Activated B cell treated with CpG ODN at 0.5 μM for 24 hours (primary cell): ENCODE measurements at regions of chr7 and their contacts with region 1.

Region 1: GRCh38 chr7:7182156-7183060 is at the start of gene C1GALT1:
- DNase-seq: peak; percentile 94
- ATAC-seq: peak; percentile 84
- H3K4me3 Mint-ChIP-seq: peak within 1 kb of the TSS; percentile 99
- H3K27ac Mint-ChIP-seq: peak within 1 kb of the TSS; percentile 100
- H3K4me1 Mint-ChIP-seq: peaks cover 43% of the 10 kb centered on the region
- H3K27me3 Mint-ChIP-seq: no peaks in the 10 kb centered on the region
- CTCF ChIP-seq: no peak
- total RNA-seq, gene C1GALT1: 42.1 and 44.2 TPM in 2 replicates

Region 2: DNA sequence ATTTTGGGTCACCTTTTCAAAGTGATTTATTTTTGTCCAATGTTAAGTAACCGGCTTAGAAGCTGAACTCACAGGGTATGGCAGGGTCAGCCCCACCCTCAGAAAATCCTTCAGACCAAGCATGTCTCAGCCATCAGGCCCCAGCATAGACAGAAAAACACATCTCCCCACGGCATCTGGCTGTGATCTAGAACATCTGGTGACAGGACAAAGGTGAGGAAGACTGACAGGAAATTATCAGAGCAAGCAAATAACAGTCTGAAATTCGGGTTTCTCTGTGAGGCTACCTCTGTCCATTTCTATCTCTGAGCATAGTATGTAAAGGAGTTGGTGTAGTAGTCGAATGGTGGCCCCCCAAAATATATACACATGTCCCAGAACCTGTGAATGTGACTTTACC is 177.1 kb before region 1 on chr7:
- CTCF ChIA-PET with region 1: no interaction called
- POLR2A ChIA-PET with region 1: no interaction called
- intact Hi-C with region 1: no loop called
- DNase-seq: no peak
- ATAC-seq: no peak
- H3K4me3 Mint-ChIP-seq: no peak overlapping the region
- H3K27ac Mint-ChIP-seq: no peak overlapping the region
- H3K4me1 Mint-ChIP-seq: no peaks in the 10 kb centered on the region
- H3K27me3 Mint-ChIP-seq: peaks cover 14% of the 10 kb centered on the region
- CTCF ChIP-seq: no peak

Region 3: GRCh38 chr7:7032210-7032609 is 150.2 kb before region 1 on chr7:
- CTCF ChIA-PET with region 1: no interaction called
- POLR2A ChIA-PET with region 1: no interaction called
- intact Hi-C with region 1: no loop called
- DNase-seq: no peak
- ATAC-seq: no peak
- H3K4me3 Mint-ChIP-seq: no peak overlapping the region
- H3K27ac Mint-ChIP-seq: no peak overlapping the region
- H3K4me1 Mint-ChIP-seq: no peaks in the 10 kb centered on the region
- H3K27me3 Mint-ChIP-seq: peaks cover 42% of the 10 kb centered on the region
- CTCF ChIP-seq: no peak

Region 4: GRCh38 chr7:7157177-7157886 is 25.1 kb before region 1 on chr7:
- CTCF ChIA-PET with region 1: interaction called, 11 read pairs
- POLR2A ChIA-PET with region 1: interaction called, 40 read pairs
- intact Hi-C with region 1: loop called (anchors 1 kb)
- DNase-seq: no peak
- ATAC-seq: peak; percentile 86
- H3K4me3 Mint-ChIP-seq: peak overlapping the region; percentile 88
- H3K27ac Mint-ChIP-seq: peak overlapping the region; percentile 95
- H3K4me1 Mint-ChIP-seq: peaks cover 56% of the 10 kb centered on the region
- H3K27me3 Mint-ChIP-seq: no peaks in the 10 kb centered on the region
- CTCF ChIP-seq: no peak

Region 5: DNA sequence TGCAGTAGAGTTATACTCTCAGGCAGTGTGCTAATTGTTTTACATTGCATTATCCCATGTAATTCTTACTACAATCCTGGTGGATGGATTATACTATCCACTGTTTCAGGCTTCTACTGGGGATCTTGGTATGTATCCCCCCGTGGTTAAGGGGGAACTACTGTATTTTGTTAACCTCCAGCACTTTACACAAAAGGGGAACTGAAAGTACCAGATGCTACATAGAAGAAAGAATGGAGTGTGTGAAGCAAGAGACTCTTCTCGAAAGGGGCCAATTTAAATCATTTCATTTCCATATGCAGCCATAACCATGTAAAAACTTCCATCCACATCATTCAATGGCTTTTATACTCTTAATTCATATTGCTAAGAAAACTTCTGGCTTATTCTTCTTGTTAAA is 69.3 kb after region 1 on chr7:
- CTCF ChIA-PET with region 1: interaction called, 13 read pairs
- POLR2A ChIA-PET with region 1: interaction called, 32 read pairs
- intact Hi-C with region 1: loop called (anchors 1 kb)
- DNase-seq: no peak
- ATAC-seq: peak; percentile 96
- H3K4me3 Mint-ChIP-seq: peak overlapping the region; percentile 49
- H3K27ac Mint-ChIP-seq: peak overlapping the region; percentile 96
- H3K4me1 Mint-ChIP-seq: peaks cover 85% of the 10 kb centered on the region
- H3K27me3 Mint-ChIP-seq: no peaks in the 10 kb centered on the region
- CTCF ChIP-seq: no peak

Region 6: GRCh38 chr7:7321720-7322128 is 139.3 kb after region 1 on chr7:
- CTCF ChIA-PET with region 1: interaction called, 4 read pairs
- POLR2A ChIA-PET with region 1: no interaction called
- intact Hi-C with region 1: loop called (anchors 5 kb)
- DNase-seq: peak; percentile 18
- ATAC-seq: peak; percentile 95
- H3K4me3 Mint-ChIP-seq: no peak overlapping the region
- H3K27ac Mint-ChIP-seq: peak overlapping the region; percentile 33
- H3K4me1 Mint-ChIP-seq: peaks cover 27% of the 10 kb centered on the region
- H3K27me3 Mint-ChIP-seq: no peaks in the 10 kb centered on the region
- CTCF ChIP-seq: no peak

Region 7: DNA sequence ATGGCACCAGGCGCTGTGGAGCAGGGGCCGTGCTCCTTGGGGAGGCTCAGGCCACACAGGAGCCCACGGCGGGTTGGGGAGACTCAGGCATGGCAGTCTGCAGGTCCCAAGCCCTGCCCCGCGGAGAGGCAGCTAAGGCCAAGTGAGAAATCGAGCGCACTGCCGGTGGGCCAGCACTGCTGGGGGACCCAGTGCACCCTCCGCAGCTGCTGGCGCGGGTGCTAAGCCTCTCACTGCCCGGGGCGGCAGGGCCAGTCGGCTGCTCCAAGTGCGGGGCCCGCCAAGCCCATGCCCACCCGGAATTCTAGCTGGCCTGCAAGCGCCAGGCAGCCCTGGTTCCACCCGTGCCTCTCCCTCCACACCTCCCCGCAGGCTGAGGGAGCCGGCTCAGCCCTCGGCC is 296.2 kb after region 1 on chr7:
- CTCF ChIA-PET with region 1: no interaction called
- POLR2A ChIA-PET with region 1: no interaction called
- intact Hi-C with region 1: no loop called
- DNase-seq: no peak
- ATAC-seq: no peak
- H3K4me3 Mint-ChIP-seq: no peak overlapping the region
- H3K27ac Mint-ChIP-seq: no peak overlapping the region
- H3K4me1 Mint-ChIP-seq: no peaks in the 10 kb centered on the region
- H3K27me3 Mint-ChIP-seq: no peaks in the 10 kb centered on the region
- CTCF ChIP-seq: no peak

Region 8: DNA sequence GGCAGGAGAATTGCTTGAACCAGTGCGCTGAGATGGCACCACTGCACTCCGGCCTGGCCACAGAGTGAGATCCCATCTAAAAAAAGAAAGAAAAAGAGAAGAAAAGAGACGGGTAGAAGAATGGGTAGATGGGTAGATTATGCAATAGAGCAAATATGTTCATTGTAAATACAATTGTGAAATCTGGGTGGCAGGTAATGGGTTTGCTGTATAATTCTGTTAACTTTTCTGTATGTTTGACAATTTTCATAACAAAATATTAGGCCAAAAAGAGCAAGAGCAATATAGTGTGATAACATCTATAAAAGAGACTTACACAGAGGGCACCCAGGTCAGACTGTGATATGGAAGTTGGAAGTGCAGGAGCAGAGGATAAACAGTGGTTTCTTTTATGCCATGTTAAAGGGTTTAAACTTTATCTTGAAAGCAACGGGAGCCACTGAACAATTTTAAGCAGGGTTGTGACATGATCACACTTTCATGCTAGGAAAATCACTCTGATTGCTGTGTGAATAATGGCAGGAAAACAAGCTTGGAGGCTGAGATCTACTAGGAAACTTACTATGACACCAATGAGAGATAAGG is 359.9 kb after region 1 on chr7:
- CTCF ChIA-PET with region 1: interaction called, 7 read pairs
- POLR2A ChIA-PET with region 1: no interaction called
- intact Hi-C with region 1: loop called (anchors 2 kb)
- DNase-seq: no peak
- ATAC-seq: no peak
- H3K4me3 Mint-ChIP-seq: no peak overlapping the region
- H3K27ac Mint-ChIP-seq: no peak overlapping the region
- H3K4me1 Mint-ChIP-seq: peaks cover 2% of the 10 kb centered on the region
- H3K27me3 Mint-ChIP-seq: peaks cover 6% of the 10 kb centered on the region
- CTCF ChIP-seq: no peak

Region 9: GRCh38 chr7:7640221-7641128 is 458.1 kb after region 1 on chr7 and contains the start of gene UMAD1:
- CTCF ChIA-PET with region 1: no interaction called
- POLR2A ChIA-PET with region 1: interaction called, 18 read pairs
- intact Hi-C with region 1: loop called (anchors 1 kb)
- DNase-seq: peak; percentile 92
- ATAC-seq: peak; percentile 88
- H3K4me3 Mint-ChIP-seq: peak within 1 kb of the TSS; percentile 97
- H3K27ac Mint-ChIP-seq: peak within 1 kb of the TSS; percentile 97
- H3K4me1 Mint-ChIP-seq: peaks cover 38% of the 10 kb centered on the region
- H3K27me3 Mint-ChIP-seq: no peaks in the 10 kb centered on the region
- CTCF ChIP-seq: no peak
- total RNA-seq, gene UMAD1: 13.9 and 15.4 TPM in 2 replicates

Region 10: DNA sequence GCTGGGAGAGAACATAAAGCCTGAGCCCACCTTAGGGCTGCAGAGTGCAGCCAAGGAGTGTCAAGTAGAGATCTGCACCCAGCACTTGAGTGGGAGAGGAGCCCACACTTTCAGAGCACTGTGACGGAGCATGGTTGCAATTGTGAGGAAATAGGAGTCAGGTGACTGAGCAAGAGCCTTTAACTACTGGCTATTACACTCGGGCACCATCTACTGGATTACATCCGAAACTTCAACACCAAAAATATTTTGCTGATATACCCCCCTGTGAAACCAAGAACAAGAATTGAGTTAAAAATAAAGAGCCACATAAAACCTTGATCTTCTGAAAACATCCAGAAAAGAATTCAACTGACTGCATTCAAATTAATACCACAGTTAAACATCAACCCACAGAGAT is 1908.9 kb after region 1 on chr7:
- CTCF ChIA-PET with region 1: no interaction called
- POLR2A ChIA-PET with region 1: no interaction called
- intact Hi-C with region 1: no loop called
- DNase-seq: no peak
- ATAC-seq: no peak
- H3K4me3 Mint-ChIP-seq: no peak overlapping the region
- H3K27ac Mint-ChIP-seq: no peak overlapping the region
- H3K4me1 Mint-ChIP-seq: no peaks in the 10 kb centered on the region
- H3K27me3 Mint-ChIP-seq: no peaks in the 10 kb centered on the region
- CTCF ChIP-seq: no peak